ENCODE measurements at regions of chr5 and their contacts with region 1.

Region 1: DNA sequence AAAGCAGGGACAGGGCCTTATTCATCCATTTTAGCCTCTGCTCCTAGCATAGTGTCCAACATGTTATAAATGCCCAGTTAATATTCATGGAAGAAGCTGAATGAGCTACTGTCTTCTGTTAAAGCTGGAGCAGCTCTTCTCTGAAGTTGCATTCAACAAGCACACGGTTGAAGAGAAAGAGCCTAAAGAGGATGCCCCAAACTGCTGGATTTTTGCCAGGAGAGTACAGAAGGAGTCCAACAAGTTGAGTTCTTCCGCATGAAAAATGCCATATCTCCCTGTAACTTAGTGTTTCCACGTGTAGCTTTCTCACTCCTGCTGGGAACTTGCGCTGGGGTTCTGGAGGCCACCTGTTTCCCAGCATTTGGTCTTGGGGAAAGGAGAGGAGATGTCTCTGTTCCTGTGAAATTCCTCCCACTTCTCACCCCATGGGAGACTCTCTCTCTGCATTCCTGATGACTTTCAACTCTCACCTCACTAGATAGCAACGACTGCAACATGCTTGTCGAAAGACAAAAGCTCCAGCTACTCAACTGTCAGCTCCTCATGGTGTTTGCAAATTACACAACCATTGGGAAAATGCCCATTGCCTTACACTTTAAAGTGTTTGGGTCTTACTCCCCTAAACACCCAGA is 122.8 kb downstream of the KIF4B start:
- DNase-seq: no peak
- ATAC-seq: peak; percentile 70

Region 2: GRCh38 chr5:154972476-154973080 is 163.8 kb before region 1 on chr5:
- intact Hi-C with region 1: loop called (anchors 10 kb)
- DNase-seq: peak; percentile 39
- ATAC-seq: peak; percentile 79

Region 3: DNA sequence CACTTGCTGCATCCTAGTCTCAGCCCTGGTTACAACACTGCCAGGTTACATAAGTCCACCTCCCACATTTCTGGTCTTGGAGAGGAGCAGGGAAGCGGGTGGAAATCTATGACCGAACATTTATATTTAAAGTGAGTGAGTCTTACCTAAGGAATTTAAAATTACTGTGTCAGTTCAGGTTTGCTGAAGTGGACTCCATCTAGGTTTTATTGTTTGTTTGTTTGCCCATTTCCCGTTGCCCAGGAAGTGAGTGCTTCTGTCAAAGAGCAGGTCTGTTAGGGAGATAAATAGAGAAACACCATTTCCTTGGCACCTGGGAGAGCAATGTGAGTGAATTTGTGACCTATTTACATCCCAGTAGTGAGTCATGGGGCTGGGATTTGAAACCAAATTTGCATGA is 56.7 kb after region 1 on chr5:
- intact Hi-C with region 1: loop called (anchors 2 kb)
- DNase-seq: no peak
- ATAC-seq: peak; percentile 88

Measured in left ventricle myocardium superior (tissue), 1 donor.